IMR-90 (cell line): ENCODE measurements at regions of chr1 and their contacts with region 1.

Region 1: GRCh38 chr1:1179926-1180861 is 6.5 kb downstream of the TTLL10 start:
- DNase-seq: no peak
- ATAC-seq: no peak
- H3K4me3 ChIP-seq: no peak overlapping the region
- H3K27ac ChIP-seq: no peak overlapping the region
- H3K4me1 ChIP-seq: no peaks in the 10 kb centered on the region
- H3K27me3 ChIP-seq: peaks cover 25% of the 10 kb centered on the region
- CTCF ChIP-seq: no peak
- POLR2A ChIP-seq: no peak
- RAD21 ChIP-seq: no peak

Region 2: GRCh38 chr1:1137256-1138045 is 42.7 kb before region 1 on chr1:
- CTCF ChIA-PET with region 1: no interaction called
- POLR2A ChIA-PET with region 1: interaction called, 11 read pairs
- dilution Hi-C with region 1: no loop called
- in situ Hi-C with region 1: no loop called
- intact Hi-C with region 1: no loop called
- DNase-seq: no peak
- ATAC-seq: no peak
- H3K4me3 ChIP-seq: no peak overlapping the region
- H3K27ac ChIP-seq: no peak overlapping the region
- H3K4me1 ChIP-seq: no peaks in the 10 kb centered on the region
- H3K27me3 ChIP-seq: peaks cover 29% of the 10 kb centered on the region
- CTCF ChIP-seq: no peak
- POLR2A ChIP-seq: no peak
- RAD21 ChIP-seq: no peak

Region 3: GRCh38 chr1:1200851-1201810 is 20.9 kb after region 1 on chr1:
- CTCF ChIA-PET with region 1: no interaction called
- POLR2A ChIA-PET with region 1: no interaction called
- dilution Hi-C with region 1: no loop called
- in situ Hi-C with region 1: no loop called
- intact Hi-C with region 1: no loop called
- DNase-seq: peak; percentile 63
- ATAC-seq: peak; percentile 88
- H3K4me3 ChIP-seq: peak overlapping the region; percentile 71
- H3K27ac ChIP-seq: peak overlapping the region; percentile 61; the same call in 1 of the 2 replicates
- H3K4me1 ChIP-seq: no peaks in the 10 kb centered on the region
- H3K27me3 ChIP-seq: no peaks in the 10 kb centered on the region; the same call in 1 of the 2 replicates
- CTCF ChIP-seq: no peak
- POLR2A ChIP-seq: peak; percentile 3; the same call in 1 of the 2 replicates
- RAD21 ChIP-seq: no peak

Region 4: GRCh38 chr1:1291548-1292441 is 111.6 kb after region 1 on chr1:
- CTCF ChIA-PET with region 1: no interaction called
- POLR2A ChIA-PET with region 1: no interaction called
- dilution Hi-C with region 1: no loop called
- in situ Hi-C with region 1: no loop called
- intact Hi-C with region 1: no loop called
- DNase-seq: peak; percentile 53
- ATAC-seq: peak; percentile 59
- H3K4me3 ChIP-seq: no peak overlapping the region
- H3K27ac ChIP-seq: no peak overlapping the region
- H3K4me1 ChIP-seq: no peaks in the 10 kb centered on the region; the same call in 1 of the 2 replicates
- H3K27me3 ChIP-seq: no peaks in the 10 kb centered on the region
- CTCF ChIP-seq: peak; percentile 59
- POLR2A ChIP-seq: no peak
- RAD21 ChIP-seq: peak; percentile 59